PC-9 (cell line): ENCODE measurements at regions of chr14 and their contacts with region 1.

Region 1: DNA sequence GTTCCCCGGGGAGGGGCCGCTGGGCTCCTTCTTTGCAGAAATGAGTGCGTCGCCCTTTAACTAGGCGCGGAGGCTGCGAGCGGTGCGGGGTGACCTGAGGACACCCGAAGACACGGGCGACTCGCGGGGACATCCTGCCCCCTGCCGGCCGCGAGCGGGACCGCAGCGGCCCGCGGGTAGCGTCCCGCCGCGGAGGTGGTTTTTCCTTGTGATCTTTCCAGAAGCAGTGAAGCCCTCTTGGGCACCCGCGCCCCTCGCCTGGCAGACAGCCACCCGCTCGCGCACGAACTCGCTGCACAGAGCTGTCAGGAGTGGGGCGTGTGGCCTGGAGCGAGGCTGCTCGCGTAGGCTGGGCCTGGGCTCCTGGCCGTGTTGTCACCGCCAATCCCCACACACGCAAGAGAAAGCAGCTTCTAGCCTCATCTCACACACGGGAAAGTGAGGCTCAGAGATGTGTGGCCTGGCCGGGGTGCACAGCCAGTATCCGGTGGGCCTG is 67.2 kb downstream of the DIO3 start:
- DNase-seq: peak; percentile 64 to 92
- H3K4me3 ChIP-seq: no peak overlapping the region
- H3K27ac ChIP-seq: no peak overlapping the region
- H3K4me1 ChIP-seq: peaks cover 19% of the 10 kb centered on the region
- H3K27me3 ChIP-seq: no peaks in the 10 kb centered on the region
- CTCF ChIP-seq: peak; percentile 100

Region 2: DNA sequence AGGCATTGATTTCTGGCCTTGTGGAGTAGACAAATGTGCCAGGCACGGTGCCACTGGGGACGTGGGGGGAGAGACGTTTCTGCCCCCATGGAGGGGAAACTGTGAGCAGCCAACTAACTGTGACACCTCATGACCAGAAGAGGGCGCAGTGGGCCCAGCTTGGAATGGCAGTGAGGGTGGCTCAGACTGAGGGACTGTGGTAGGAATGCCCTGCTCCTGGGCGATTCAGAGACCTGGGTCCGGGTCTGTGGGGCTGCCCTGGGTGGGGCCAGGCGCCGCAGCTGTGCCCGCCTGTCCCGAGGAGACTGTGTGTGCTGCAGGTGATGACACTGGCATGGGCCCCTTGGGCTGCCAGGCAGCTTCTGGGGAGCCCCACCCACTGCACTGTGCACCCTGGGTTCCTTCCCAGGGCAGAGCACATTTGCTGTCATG is 1244.8 kb before region 1 on chr14:
- CTCF ChIA-PET with region 1: no interaction called
- POLR2A ChIA-PET with region 1: no interaction called
- intact Hi-C with region 1: loop called (anchors 10 kb)
- DNase-seq: no peak
- H3K4me3 ChIP-seq: no peak overlapping the region
- H3K27ac ChIP-seq: no peak overlapping the region
- H3K4me1 ChIP-seq: no peaks in the 10 kb centered on the region
- H3K27me3 ChIP-seq: no peaks in the 10 kb centered on the region
- CTCF ChIP-seq: peak; percentile 75

Region 3: DNA sequence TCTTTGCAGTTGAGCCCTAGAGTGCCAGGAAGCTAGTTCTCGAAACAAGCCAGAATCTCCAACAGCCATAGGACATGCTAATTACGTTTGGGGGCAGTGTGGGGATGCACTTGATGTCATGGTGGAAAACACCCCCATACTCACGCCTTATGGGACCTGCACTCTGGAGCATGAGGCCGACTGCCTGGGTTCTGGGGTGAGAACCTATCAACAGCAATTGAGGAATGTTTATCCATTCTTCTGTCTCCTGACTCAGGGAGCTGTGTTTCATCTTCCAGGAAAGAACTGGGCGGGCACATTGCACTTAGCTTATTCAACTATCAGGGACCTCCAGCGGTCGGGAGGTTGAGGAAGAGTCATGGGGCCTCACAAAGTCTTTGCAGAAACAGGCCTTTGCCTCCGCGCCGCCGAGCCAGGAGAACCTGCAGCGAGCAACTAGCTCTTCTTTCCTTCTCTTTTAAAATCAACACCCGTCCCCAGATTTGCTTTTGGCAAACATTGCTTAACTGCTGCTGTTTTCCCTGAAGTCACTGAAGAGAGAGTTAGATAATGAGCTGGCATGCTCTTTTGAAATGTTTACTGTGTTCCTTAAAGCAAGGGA is 293.4 kb before region 1 on chr14:
- CTCF ChIA-PET with region 1: no interaction called
- POLR2A ChIA-PET with region 1: no interaction called
- intact Hi-C with region 1: loop called (anchors 10 kb)
- DNase-seq: peak in 1 of 2 experiments; percentile 49
- H3K4me3 ChIP-seq: no peak overlapping the region
- H3K27ac ChIP-seq: no peak overlapping the region
- H3K4me1 ChIP-seq: peaks cover 30% of the 10 kb centered on the region
- H3K27me3 ChIP-seq: no peaks in the 10 kb centered on the region
- CTCF ChIP-seq: no peak

Region 4: DNA sequence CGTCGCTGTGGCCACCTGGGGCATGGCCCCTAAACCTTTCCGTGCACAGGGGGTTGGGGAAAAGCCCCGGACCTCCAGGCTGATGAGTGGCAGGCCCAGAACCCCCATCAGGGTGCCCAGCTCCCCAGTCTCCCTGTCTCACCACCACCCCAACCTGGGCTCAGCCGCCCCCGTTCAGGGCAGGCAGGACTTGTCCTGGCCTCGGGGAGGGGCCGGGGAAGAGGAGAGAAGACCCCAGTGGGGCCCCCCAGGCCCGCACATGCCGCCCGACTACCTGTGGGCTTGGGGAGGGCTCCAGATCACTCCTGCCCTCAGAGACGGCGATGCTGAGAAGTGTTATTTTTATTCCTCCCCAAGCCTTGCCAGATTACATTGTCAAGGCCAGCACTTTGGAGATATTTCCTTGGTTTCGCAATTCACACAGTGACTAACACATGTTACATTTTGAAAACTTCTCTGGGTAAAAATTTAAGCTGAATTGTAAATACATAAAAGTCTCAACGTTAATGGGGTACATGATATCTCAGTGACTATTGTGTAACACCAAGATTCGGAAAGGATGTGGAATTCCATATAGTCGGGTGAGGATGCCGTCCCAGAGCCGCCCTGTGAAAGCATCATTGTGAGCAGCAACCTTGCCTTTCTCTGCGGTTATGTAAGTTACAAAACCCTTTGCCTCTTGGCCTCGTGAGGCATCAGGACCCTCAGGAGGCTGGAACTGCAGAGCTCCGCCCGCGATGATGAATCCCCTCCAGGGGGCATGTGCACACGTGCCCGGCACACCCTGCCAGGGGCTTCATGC is 152.9 kb before region 1 on chr14:
- CTCF ChIA-PET with region 1: no interaction called
- POLR2A ChIA-PET with region 1: no interaction called
- intact Hi-C with region 1: loop called (anchors 5 kb)
- DNase-seq: peak; percentile 44 to 94
- H3K4me3 ChIP-seq: peak overlapping the region; percentile 68
- H3K27ac ChIP-seq: peak overlapping the region; percentile 91
- H3K4me1 ChIP-seq: peaks cover 59% of the 10 kb centered on the region
- H3K27me3 ChIP-seq: no peaks in the 10 kb centered on the region
- CTCF ChIP-seq: no peak

Region 5: GRCh38 chr14:101665515-101666078 is 37.1 kb after region 1 on chr14:
- CTCF ChIA-PET with region 1: no interaction called
- POLR2A ChIA-PET with region 1: no interaction called
- intact Hi-C with region 1: no loop called
- DNase-seq: peak; percentile 71 to 81
- H3K4me3 ChIP-seq: no peak overlapping the region
- H3K27ac ChIP-seq: no peak overlapping the region
- H3K4me1 ChIP-seq: no peaks in the 10 kb centered on the region
- H3K27me3 ChIP-seq: no peaks in the 10 kb centered on the region
- CTCF ChIP-seq: peak; percentile 99

Region 6: GRCh38 chr14:102362545-102363181 is 734.1 kb after region 1 on chr14 and contains the starts of genes CINP and TECPR2:
- CTCF ChIA-PET with region 1: no interaction called
- POLR2A ChIA-PET with region 1: no interaction called
- intact Hi-C with region 1: loop called (anchors 10 kb)
- DNase-seq: peak; percentile 97 to 99
- H3K4me3 ChIP-seq: peak within 1 kb of the TSS; percentile 89
- H3K27ac ChIP-seq: peak within 1 kb of the TSS; percentile 37
- H3K4me1 ChIP-seq: peaks cover 17% of the 10 kb centered on the region
- H3K27me3 ChIP-seq: no peaks in the 10 kb centered on the region
- CTCF ChIP-seq: no peak
- total RNA-seq, gene CINP: 54.6 and 65.1 TPM in 2 replicates
- total RNA-seq, gene TECPR2: 29.7 and 34.7 TPM in 2 replicates

Region 7: DNA sequence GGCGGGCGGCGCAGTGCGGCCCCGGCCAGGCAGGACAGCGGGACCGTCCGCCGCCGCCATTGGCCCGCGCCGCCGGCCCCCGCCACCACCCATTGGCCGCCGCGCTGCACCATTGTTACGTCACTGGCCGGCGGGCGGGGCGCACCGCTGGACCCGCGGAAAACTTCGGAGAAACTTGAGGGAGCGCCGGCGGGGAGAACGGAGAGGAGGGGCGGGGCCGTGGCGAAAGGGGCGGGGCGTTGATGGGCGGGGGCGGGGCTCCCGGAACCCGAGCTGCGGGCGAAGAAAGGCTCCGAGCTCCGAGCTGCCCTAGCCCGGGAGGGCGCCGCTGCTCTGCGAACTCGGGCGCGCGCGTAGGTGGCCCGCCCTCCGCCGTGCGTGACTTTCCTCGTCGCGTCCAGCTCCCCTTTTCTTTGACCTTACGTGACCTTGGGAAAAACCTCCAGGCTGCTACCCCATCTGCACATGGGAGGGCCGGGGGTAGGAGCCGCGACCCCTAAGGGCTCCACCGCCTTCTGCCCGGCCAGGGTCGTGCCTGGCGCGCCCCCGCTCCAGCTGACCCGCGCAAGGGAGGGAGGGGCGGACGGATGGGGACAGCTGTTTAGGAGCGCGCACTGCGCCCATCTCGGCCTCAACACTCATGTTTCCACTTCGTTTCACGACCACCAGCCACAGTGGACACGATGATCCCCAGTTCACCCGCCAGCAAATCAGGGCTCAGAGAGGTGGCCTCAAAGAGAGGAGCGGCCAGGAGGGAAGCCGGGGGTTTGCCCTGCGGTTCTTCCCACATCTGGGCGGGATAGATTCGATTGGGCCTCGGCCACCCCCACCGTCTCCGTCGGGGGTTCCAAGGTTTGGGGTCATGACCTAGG is 881.5 kb after region 1 on chr14 and contains the start of gene ANKRD9:
- CTCF ChIA-PET with region 1: no interaction called
- POLR2A ChIA-PET with region 1: interaction called, 4 read pairs
- intact Hi-C with region 1: loop called (anchors 2 kb)
- DNase-seq: peak; percentile 91 to 99
- H3K4me3 ChIP-seq: peak within 1 kb of the TSS; percentile 91
- H3K27ac ChIP-seq: peak within 1 kb of the TSS; percentile 24
- H3K4me1 ChIP-seq: peaks cover 31% of the 10 kb centered on the region
- H3K27me3 ChIP-seq: no peaks in the 10 kb centered on the region
- CTCF ChIP-seq: no peak
- total RNA-seq, gene ANKRD9: 44.6 and 68.8 TPM in 2 replicates

Region 8: GRCh38 chr14:102516531-102517415 is 888.3 kb after region 1 on chr14:
- CTCF ChIA-PET with region 1: interaction called, 16 read pairs
- POLR2A ChIA-PET with region 1: no interaction called
- intact Hi-C with region 1: loop called (anchors 2 kb)
- DNase-seq: peak; percentile 55 to 72
- H3K4me3 ChIP-seq: peak overlapping the region; percentile 73
- H3K27ac ChIP-seq: no peak overlapping the region
- H3K4me1 ChIP-seq: peaks cover 7% of the 10 kb centered on the region
- H3K27me3 ChIP-seq: no peaks in the 10 kb centered on the region
- CTCF ChIP-seq: peak; percentile 89

Region 9: GRCh38 chr14:102786768-102787167 is 1158.2 kb after region 1 on chr14:
- CTCF ChIA-PET with region 1: no interaction called
- POLR2A ChIA-PET with region 1: no interaction called
- intact Hi-C with region 1: no loop called
- DNase-seq: no peak
- H3K4me3 ChIP-seq: no peak overlapping the region
- H3K27ac ChIP-seq: no peak overlapping the region
- H3K4me1 ChIP-seq: no peaks in the 10 kb centered on the region
- H3K27me3 ChIP-seq: no peaks in the 10 kb centered on the region
- CTCF ChIP-seq: no peak